ENCODE measurements at regions of chr6 and their contacts with region 1.

Region 1: DNA sequence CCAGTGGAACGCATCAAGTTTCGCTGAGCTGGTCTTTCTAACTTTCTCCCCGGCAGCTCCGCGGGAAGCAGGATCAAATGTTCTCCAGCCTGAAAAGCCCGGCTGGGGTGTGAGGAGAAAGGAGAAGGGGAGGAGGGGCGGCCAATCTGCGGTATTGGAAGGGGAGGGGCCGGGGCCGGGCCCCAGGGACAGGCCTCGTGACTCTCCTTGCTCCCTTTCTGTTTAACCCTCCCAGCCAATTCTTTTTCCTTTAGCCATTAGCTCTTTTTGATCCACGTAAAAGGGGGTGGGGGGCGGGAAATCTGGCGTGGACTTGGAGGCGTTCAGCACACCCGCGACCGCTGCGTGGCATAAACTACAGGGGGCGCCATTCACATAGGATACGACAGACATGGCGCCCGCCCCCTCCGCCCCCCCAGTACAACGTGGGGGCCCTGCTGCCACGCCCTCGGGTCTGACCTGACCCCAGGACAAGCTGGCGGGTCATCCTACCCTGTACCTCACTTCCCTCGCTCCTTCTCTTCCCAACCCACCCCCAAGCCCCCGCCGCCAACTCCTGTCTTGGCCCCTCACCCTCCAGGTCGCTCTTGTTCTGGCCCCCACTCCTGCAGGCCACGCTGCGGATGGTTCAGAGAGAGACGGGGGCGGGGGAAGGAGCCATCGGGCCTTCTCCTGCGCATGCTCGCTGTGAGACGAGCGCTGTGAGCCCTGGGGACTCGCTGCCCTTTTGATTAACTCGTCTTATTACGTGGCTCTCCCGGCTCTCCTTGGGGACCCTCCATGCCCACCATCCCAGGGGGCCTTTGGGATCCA is 7.8 kb upstream of the MDGA1 start:
- DNase-seq: peak; percentile 60
- H3K4me3 ChIP-seq: peak overlapping the region; percentile 39 to 43
- H3K27ac ChIP-seq: peak overlapping the region; percentile 70
- H3K4me1 ChIP-seq: peaks cover 4% of the 10 kb centered on the region
- H3K27me3 ChIP-seq: no peaks in the 10 kb centered on the region
- CTCF ChIP-seq: peak; percentile 24 to 71 (median 65)
- POLR2A ChIP-seq: no peak

Region 2: GRCh38 chr6:37538107-37538506 is 167.3 kb before region 1 on chr6:
- intact Hi-C with region 1: no loop called
- DNase-seq: no peak
- H3K4me3 ChIP-seq: no peak overlapping the region
- H3K27ac ChIP-seq: no peak overlapping the region
- H3K4me1 ChIP-seq: peaks cover 5% of the 10 kb centered on the region
- H3K27me3 ChIP-seq: peaks cover 4% of the 10 kb centered on the region
- CTCF ChIP-seq: peak in 1 of 4 experiments; percentile 14
- POLR2A ChIP-seq: no peak

Region 3: GRCh38 chr6:37783856-37784584 is 78.6 kb after region 1 on chr6:
- intact Hi-C with region 1: loop called (anchors 10 kb)
- DNase-seq: peak; percentile 21
- H3K4me3 ChIP-seq: peak overlapping the region; percentile 34 to 40
- H3K27ac ChIP-seq: peak overlapping the region; percentile 53 to 63
- H3K4me1 ChIP-seq: peaks cover 7% of the 10 kb centered on the region
- H3K27me3 ChIP-seq: no peaks in the 10 kb centered on the region
- CTCF ChIP-seq: no peak
- POLR2A ChIP-seq: no peak